ENCODE measurements at regions of chr13 and their contacts with region 1.

Region 1: DNA sequence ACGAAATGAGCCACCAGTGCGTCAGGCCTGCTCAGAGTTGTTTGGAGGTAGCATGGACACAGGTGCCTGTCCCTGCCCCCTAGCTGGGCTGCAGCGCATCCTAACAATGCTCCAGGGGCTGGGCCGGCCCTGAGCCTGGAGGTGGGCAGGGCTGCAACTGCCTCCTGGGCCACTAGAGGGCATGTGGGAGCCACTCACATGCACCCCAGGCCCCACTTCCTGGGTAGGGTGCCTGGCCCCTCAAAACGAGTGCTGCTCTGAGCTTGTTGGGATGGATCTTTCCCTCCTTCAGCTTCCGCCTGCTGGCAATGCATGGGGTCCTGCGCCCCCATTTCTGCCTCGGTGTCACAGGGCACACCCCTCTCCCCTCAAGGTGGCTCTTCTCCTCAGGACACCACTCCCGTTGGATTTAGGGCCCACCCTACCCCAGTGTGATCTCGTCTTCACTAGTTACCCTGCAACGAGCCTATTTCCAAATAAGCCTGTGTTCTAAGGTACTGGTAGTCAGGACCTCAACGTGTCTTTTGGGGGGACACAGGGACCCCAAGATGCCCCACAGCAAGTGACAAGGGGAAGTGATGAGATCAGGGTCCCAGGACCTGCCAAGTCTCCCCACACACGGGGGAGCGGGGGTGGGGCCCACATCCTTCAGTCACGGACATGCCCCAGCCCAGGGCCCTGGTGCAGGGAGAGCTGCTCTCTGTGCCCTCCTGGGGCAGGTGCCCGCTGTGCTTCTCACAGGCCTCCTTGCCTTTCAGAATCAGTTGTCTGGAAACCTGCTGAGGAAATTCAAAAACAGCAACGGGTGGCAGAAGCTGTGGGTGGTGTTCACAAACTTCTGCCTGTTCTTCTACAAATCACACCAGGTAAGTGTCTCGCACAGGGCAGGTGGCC is 131.3 kb downstream of the STK24 start:
- DNase-seq: peak; percentile 68 to 83
- ATAC-seq: peak; percentile 82 to 90 (median 88)
- H3K4me3 ChIP-seq: no peak overlapping the region
- H3K27ac ChIP-seq: no peak overlapping the region
- H3K4me1 ChIP-seq: peaks cover 14% of the 10 kb centered on the region
- H3K27me3 ChIP-seq: no peaks in the 10 kb centered on the region
- CTCF ChIP-seq: peak; percentile 97

Region 2: DNA sequence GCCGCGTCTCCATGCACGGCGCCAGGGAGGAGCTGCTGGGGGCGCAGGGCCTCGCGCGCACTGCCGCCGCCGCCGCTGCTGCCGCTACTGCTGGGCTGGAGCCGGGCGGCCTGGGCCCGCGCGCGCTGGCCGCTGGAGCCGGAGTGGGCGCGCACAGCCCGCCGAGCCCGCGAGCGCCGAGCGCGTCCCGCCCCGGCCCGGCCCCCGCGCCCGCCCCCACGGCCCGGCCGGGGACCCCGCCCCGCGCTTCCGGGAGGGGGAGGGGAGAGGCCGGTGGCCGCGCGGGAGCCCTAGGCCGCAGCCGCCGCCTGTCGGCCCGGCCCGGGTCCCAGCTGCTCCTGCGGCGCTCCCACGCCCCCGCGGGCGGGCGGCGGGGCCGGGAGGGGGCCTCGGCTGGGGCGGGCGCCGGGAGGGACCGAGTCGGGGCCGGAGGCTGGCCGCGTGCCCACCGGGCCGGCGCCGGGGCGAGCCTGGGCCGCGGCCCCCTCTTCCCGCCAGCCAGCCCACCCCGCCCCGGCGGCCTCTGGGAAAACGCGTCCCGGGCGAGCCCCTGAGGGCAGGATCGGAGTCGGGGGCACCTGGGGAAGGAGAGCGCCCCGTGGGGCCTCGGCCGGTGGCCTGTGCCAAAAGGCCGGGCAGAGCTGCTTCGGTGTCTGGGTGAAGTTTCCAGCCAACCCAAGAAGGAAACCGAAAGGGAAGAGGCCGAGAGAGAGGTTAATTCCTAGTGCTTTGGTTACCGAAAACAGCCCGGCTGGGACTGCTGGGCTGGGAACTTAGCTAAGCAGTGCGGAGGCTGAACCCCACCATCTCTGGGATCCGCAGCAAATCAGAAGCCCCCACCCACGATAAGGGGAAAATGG is 131.6 kb after region 1 on chr13 and contains the start of gene STK24:
- intact Hi-C with region 1: loop called in 1 of 2 experiments (anchors 5 kb)
- DNase-seq: peak; percentile 82 to 84
- ATAC-seq: peak; percentile 76 to 89 (median 82)
- H3K4me3 ChIP-seq: peak within 1 kb of the TSS; percentile 98
- H3K27ac ChIP-seq: peak within 1 kb of the TSS; percentile 97
- H3K4me1 ChIP-seq: peaks cover 31% of the 10 kb centered on the region
- H3K27me3 ChIP-seq: no peaks in the 10 kb centered on the region
- CTCF ChIP-seq: no peak
- total RNA-seq, gene STK24: 27.2 to 38.7 (median 33.9) TPM

Region 3: DNA sequence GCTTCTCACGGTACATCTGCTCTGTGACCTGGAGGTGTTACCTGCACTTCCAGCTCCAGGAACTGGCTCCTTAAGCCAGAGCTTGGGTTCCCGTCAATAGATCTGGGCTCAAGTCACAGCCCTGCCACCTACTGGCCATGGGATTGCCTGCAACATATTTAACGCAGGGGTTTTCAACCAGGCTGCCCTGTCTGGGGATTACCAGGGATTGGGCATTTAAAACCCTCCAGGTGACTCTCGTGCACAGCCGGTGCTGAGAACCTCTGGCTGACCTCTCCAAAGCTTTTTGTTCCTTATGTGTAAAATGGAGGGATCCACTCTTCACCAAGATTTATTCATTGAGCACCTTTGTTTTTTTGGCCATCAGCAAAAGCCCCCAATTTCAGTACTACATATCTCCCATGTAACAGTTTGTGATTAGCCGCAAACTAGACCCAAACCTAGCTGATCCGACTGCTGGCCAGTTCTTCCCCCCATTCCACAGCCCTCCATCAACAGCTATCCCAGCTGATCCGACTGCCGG is 207.9 kb after region 1 on chr13:
- intact Hi-C with region 1: loop called (anchors 2 to 5 kb)
- DNase-seq: peak; percentile 68 to 79
- ATAC-seq: peak; percentile 91 to 96 (median 94)
- H3K4me3 ChIP-seq: no peak overlapping the region
- H3K27ac ChIP-seq: no peak overlapping the region
- H3K4me1 ChIP-seq: no peaks in the 10 kb centered on the region
- H3K27me3 ChIP-seq: peaks cover 0 to 5% (median 0%) of the 10 kb centered on the region in 3 donors
- CTCF ChIP-seq: peak; percentile 88

Region 4: GRCh38 chr13:98672944-98673545 is 227.5 kb after region 1 on chr13:
- intact Hi-C with region 1: loop called (anchors 2 to 5 kb)
- DNase-seq: peak; percentile 66 to 83
- ATAC-seq: peak; percentile 80 to 97 (median 92)
- H3K4me3 ChIP-seq: no peak overlapping the region
- H3K27ac ChIP-seq: no peak overlapping the region
- H3K4me1 ChIP-seq: no peaks in the 10 kb centered on the region
- H3K27me3 ChIP-seq: peaks cover 0 to 1% (median 0%) of the 10 kb centered on the region in 3 donors
- CTCF ChIP-seq: peak; percentile 91

Region 5: GRCh38 chr13:98842864-98843481 is 397.4 kb after region 1 on chr13:
- intact Hi-C with region 1: loop called in 1 of 2 experiments (anchors 10 kb)
- DNase-seq: peak; percentile 60 to 82
- ATAC-seq: peak; percentile 71 to 85 (median 75)
- H3K4me3 ChIP-seq: no peak overlapping the region
- H3K27ac ChIP-seq: no peak overlapping the region
- H3K4me1 ChIP-seq: no peaks in the 10 kb centered on the region
- H3K27me3 ChIP-seq: no peaks in the 10 kb centered on the region
- CTCF ChIP-seq: peak; percentile 75

Measured in psoas muscle (tissue), 8 donors.